H1 (cell line): ENCODE measurements at regions of chr17 and their contacts with region 1.

Region 1: GRCh38 chr17:45021607-45022287 is 29.7 kb downstream of the DCAKD start:
- DNase-seq: peak in 1 of 2 experiments; percentile 85
- H3K4me3 ChIP-seq: peak overlapping the region; percentile 9 to 58 (median 40); a peak in 7 of 8 replicates
- H3K27ac ChIP-seq: no peak overlapping the region
- H3K4me1 ChIP-seq: peaks cover 9 to 23% (median 14%) of the 10 kb centered on the region in 4 experiments
- H3K27me3 ChIP-seq: peaks cover 20 to 43% (median 40%) of the 10 kb centered on the region in 4 experiments
- CTCF ChIP-seq: peak; percentile 82 to 94 (median 87)
- EP300 ChIP-seq: no peak; a peak in 1 of 3 replicates
- POLR2A ChIP-seq: peak in 1 of 2 experiments; percentile 26; a peak in 1 of 3 replicates
- RAD21 ChIP-seq: peak; percentile 74 to 92

Region 2: GRCh38 chr17:44911133-44912001 is 110.4 kb before region 1 on chr17:
- CTCF ChIA-PET with region 1: interaction called, 29 read pairs
- POLR2A ChIA-PET with region 1: interaction called, 3 read pairs
- DNase-seq: peak; percentile 58 to 87
- H3K4me3 ChIP-seq: peak overlapping the region; percentile 21 to 62 (median 34)
- H3K27ac ChIP-seq: no peak overlapping the region
- H3K4me1 ChIP-seq: peaks cover 0 to 7% (median 5%) of the 10 kb centered on the region in 4 experiments; a peak in 6 of 7 replicates
- H3K27me3 ChIP-seq: peaks cover 0 to 21% (median 15%) of the 10 kb centered on the region in 4 experiments; a peak in 6 of 7 replicates
- CTCF ChIP-seq: peak; percentile 70 to 87 (median 82)
- EP300 ChIP-seq: no peak
- POLR2A ChIP-seq: no peak
- RAD21 ChIP-seq: peak; percentile 45 to 58

Region 3: DNA sequence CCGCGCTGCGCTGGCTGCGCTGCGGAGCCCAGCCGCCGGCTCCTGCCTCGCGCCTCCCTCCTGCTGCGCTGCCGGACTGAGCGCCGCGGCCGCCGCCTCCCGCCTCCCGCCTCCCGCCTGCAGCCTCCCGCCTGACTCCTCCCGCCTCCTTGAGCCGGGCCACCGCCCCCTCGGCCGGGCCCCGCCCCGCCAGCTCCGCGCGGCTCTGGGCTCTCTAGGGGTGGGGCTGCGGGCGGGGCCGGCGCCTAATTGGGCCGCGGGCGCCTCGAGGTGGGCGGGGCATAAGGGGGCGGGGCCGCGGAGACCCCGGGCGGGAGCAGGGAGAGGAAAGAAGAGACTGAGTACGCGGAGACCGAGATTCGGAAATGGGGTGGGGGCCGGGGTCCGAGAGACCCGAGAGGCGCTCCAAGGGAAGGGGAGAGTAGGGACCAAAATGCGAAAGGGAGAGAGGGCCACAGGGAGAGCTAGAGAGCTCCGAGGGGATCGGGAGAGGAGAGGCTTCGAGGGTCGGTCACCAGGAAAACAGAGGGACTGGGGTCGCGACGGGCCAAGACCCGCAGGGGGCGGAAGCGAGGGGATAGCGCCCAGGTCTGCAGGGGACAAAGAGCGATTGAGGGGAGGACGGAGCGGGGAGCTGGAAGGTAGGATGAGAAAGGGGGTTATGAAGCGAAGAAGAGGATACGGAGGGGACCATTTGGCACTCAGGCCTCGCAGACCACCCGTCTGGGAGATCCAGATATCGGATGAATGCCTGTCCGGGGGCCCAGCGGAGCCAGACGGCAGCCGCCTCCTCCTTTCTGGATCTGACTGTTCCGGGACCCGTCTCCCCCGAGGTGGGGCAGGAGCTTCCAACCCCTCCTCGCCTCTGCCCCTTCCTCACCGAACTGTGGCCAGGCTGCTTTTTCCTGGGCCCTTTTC is 53.3 kb before region 1 on chr17 and contains the start of gene C1QL1:
- CTCF ChIA-PET with region 1: interaction called, 58 read pairs
- POLR2A ChIA-PET with region 1: interaction called, 14 read pairs
- DNase-seq: peak; percentile 68 to 94
- H3K4me3 ChIP-seq: peak within 1 kb of the TSS; percentile 62 to 84 (median 66)
- H3K27ac ChIP-seq: no peak within 1 kb of the TSS
- H3K4me1 ChIP-seq: peaks cover 3 to 34% (median 20%) of the 10 kb centered on the region in 4 experiments
- H3K27me3 ChIP-seq: peaks cover 28 to 57% (median 53%) of the 10 kb centered on the region in 4 experiments
- CTCF ChIP-seq: peak; percentile 51 to 64 (median 63)
- EP300 ChIP-seq: no peak
- POLR2A ChIP-seq: no peak
- RAD21 ChIP-seq: peak; percentile 30 to 52; a peak in 3 of 4 replicates
- total RNA-seq, gene C1QL1: 7.5 and 7.6 TPM in 2 replicates

Region 4: DNA sequence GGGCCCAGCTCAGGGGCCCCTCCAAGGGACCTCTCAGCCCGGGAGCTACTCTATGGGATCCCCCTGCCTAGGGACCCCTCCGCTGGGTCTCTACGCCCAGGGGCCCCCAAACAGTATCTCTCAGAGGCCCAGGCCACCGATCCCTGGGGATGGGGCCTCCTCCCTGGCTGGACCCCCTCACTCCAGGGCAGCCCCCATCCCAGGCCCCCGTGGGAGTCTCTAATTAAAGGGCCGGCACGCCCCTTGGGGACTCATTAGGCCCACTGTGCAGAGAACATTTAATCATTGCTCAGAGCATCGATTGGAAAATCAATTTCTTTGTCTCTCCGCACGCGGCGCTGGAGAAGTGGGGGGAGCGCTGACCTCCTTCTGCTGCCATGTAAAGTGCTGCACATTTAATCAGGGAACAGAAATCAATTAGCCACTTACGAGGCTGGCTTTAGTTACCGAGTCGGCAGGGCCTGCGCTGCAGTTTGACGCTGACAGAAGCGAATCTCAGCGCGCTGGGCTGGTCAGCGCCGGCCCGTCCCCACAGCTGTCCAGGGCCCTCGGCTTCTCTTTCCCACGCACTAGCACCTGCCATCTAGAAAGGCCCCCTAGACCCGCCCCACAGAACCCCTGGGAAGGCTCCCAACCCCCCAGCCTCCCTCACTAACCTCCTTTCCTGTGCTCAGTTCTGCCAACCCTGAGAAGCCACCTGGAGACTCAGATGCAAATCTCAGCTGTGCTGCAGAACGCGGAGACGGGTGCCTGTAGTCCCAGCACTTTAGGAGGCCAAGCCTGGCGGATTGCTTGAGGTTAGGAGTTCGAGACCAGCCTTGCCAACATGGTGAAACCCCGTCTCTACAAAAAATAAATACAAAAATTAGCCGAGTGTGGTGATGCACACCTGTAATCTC is 33.5 kb before region 1 on chr17:
- CTCF ChIA-PET with region 1: interaction called, 102 read pairs
- POLR2A ChIA-PET with region 1: interaction called, 15 read pairs
- DNase-seq: peak in 1 of 2 experiments; percentile 60
- H3K4me3 ChIP-seq: peak overlapping the region; percentile 25 to 63 (median 32); a peak in 7 of 8 replicates
- H3K27ac ChIP-seq: no peak overlapping the region
- H3K4me1 ChIP-seq: peaks cover 0 to 7% (median 6%) of the 10 kb centered on the region in 4 experiments; a peak in 5 of 7 replicates
- H3K27me3 ChIP-seq: peaks cover 0 to 16% (median 8%) of the 10 kb centered on the region in 4 experiments; a peak in 5 of 7 replicates
- CTCF ChIP-seq: no peak
- EP300 ChIP-seq: no peak
- POLR2A ChIP-seq: no peak
- RAD21 ChIP-seq: no peak

Region 5: DNA sequence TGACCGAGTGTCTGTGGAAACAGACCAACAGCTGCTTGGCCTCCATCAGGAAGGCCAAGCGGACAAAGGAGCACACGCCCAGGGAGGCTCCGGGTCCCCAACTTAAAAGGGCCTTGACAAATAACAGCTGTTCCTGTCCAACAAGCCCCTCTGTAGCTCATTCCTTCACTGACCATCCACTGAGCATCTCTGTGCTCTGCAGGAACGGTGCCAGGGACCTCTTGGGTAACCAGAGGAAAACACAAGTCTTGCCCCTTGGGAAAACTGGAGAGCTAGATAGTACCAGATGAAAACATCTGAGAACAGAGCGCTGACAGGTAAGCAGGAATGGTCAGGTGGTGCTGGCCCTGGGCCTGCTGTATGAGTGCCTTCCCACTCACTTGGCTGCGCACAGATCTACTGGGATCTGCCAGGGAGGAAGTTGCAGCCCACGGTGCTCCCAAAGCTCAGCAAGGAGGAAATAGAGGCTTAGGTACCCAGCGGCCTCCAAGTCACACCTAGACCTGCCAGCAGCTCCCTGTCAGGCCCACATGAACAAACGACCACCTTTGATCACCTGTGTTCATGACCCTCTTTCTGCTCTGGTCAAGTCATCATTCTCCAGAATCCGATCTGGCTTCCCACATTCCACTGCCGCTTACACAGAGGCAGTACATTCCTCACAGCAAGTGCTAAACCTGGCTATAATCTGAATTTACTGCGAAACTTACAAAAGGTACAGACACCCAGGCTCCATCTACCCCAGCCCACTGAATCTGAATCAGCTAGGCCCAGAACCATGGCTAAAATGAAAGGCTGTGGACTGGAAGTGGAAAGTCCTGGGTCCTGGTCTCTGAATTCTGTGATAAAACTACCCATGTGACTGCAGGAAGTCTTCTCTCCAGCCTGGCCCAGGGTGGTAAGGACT is 17.2 kb after region 1 on chr17:
- CTCF ChIA-PET with region 1: interaction called, 120 read pairs
- POLR2A ChIA-PET with region 1: interaction called, 5 read pairs
- DNase-seq: no peak
- H3K4me3 ChIP-seq: no peak overlapping the region
- H3K27ac ChIP-seq: no peak overlapping the region
- H3K4me1 ChIP-seq: peaks cover 4 to 11% (median 7%) of the 10 kb centered on the region in 4 experiments
- H3K27me3 ChIP-seq: no peaks in the 10 kb centered on the region
- CTCF ChIP-seq: no peak
- EP300 ChIP-seq: no peak
- POLR2A ChIP-seq: no peak
- RAD21 ChIP-seq: no peak

Region 6: GRCh38 chr17:45098869-45099616 is 77.3 kb after region 1 on chr17:
- CTCF ChIA-PET with region 1: interaction called, 11 read pairs
- POLR2A ChIA-PET with region 1: no interaction called
- DNase-seq: peak; percentile 63 to 95
- H3K4me3 ChIP-seq: no peak overlapping the region
- H3K27ac ChIP-seq: no peak overlapping the region
- H3K4me1 ChIP-seq: no peaks in the 10 kb centered on the region; a peak in 1 of 7 replicates
- H3K27me3 ChIP-seq: no peaks in the 10 kb centered on the region
- CTCF ChIP-seq: peak; percentile 78 to 96 (median 95)
- EP300 ChIP-seq: no peak
- POLR2A ChIP-seq: no peak
- RAD21 ChIP-seq: peak; percentile 73 to 76